AG04449 (cell line): ENCODE measurements at regions of chr7 and their contacts with region 1.

Region 1: DNA sequence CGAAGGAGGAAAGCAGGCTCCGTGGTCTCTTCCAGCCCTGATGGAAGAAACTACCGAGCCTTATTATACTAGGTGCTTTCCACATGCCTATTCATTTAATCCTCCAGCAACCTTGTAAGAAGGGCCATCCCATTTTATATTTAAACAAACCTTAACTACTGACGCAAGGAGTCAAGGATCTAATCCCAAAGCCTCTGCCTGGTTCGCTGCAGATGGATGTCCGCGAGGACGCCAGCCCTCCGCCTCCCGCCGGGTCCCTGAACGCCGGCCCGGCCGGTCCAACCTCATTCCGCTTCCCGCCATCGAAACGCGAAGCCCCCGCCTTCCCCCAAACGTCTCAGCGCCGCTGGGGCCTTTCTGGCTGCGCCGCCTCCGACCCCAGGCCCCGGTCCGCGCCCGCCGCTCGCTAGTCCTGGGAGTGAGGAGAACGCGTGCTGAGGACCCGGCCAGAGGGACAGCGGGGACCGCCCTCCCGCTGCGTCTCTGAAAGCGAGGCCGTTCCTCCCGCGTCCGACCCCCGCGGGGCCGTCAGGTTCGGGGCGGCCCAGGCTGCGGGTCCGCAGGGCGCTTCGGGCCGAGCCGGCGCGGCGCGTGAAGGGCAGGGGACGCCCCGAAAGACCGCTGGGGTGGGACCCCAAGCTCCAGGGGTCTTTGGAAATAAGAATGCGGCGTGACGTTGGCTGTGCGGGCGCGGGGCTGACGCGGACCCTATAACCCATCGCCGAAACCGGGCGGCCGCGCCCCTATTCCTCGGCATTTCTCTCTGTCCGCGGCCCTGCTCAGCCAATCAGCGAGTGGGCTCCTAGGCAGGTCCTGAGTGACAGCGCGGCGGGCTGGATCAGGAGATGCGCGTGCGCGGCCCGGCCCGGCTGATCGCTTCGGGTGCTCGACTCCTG is at the start of gene ATP6V0E2:
- DNase-seq: peak; percentile 50
- H3K4me3 ChIP-seq: peak within 1 kb of the TSS; percentile 78
- CTCF ChIP-seq: no peak

Region 2: GRCh38 chr7:149883452-149883861 is 10.1 kb after region 1 on chr7:
- CTCF ChIA-PET with region 1: interaction called, 15 read pairs
- POLR2A ChIA-PET with region 1: no interaction called
- DNase-seq: no peak
- H3K4me3 ChIP-seq: no peak overlapping the region
- CTCF ChIP-seq: peak; percentile 78

Region 3: DNA sequence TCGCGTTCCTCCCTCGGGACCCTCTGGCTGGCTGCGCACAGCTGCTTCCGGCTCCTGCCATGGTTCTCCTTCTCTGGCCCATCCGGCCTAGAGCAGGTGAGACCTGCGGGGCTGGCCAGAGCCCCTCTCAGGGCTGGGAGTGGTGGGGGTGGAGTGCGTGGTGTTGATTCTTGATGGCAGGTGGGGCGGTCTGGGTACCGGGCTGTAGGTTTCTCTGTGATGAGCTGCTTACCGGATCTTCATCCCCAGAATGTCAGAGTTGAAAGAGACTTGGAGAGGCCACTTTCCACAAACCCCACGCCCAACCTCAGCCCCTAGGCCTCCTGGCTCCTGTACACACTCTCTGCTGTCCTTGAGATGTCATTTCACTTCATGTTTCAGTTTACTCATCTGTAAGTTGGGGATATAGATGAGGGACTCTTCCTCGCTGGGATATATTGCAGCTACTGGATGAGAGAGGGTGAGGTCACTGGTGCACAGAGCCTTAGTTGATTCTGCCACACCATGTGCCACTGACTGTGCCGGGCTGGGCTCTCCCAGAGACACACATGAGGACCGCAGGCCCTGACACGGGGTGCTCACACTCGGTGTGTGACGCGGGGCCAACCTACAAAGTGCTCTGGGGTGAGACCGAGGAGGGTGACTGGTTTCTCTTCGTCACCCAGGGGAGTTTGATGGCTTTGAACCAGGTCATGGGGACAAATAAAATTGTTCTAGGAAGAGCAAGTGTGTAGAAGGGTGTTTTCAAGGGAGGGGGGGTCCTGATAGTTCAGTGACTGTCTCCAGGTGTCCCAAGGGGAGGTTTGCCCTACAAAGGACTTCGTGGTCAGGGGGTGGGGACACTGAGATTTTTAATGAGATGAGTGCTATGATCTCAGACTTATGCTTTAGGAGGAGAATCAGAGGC is 535.3 kb after region 1 on chr7:
- CTCF ChIA-PET with region 1: no interaction called
- POLR2A ChIA-PET with region 1: no interaction called
- DNase-seq: no peak
- H3K4me3 ChIP-seq: no peak overlapping the region
- CTCF ChIP-seq: no peak